Body of pancreas (tissue), 4 donors: ENCODE measurements at regions of chr4 and their contacts with region 1.

Region 1: DNA sequence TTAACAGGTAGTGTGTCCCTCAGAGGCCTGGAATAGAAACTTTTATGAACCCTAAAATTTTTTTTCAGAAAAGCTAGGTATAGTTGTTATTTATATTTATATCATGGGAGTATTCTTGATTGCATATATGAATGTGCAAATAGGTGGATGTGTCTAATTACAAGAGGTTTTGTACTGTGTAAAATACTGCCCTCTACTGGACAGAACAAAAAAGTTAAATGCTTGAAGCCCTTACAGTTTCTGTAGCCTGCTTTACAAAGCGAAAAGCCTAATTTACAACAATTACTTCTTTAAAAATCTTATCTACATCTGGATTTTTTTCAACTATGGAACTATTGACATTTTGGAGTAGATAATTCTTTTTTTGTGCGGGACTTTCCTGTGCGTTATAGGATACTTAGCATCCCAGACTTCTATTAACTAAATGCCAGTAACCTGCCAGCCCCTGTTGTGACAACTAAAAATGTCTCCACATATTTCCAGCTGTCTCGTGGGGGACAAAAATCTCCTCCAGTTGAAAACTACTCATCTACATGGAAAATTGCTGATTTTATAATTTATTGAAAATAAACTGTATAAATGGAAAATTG is 35.1 kb downstream of the ENPEP start:
- DNase-seq: no peak
- ATAC-seq: peak; percentile 55
- H3K4me3 ChIP-seq: no peak overlapping the region
- H3K27ac ChIP-seq: no peak overlapping the region
- H3K4me1 ChIP-seq: peaks cover 7% of the 10 kb centered on the region
- H3K27me3 ChIP-seq: no peaks in the 10 kb centered on the region
- CTCF ChIP-seq: peak; percentile 21 to 79 (median 63)
- POLR2A ChIP-seq: no peak

Region 2: DNA sequence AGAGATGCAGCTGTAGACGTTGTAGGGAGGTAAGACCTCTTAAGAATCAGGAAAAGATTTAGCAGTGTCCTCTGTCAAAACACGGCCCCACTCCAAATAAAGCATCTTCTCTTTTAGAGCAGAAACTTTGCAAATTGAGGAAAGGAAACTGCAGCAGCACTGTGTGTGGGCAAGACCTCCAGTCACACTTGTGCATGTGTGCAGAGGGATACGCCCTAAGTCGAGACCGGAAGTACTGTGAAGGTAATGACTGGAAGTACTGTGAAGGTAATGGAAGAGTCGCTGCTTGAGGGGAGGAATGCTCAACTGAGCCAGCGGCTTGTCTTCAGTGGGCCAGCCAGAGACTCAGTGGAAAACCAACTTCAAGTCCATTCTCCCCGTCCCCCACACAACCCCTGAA is 551.9 kb before region 1 on chr4:
- intact Hi-C with region 1: no loop called
- DNase-seq: no peak
- ATAC-seq: no peak
- H3K4me3 ChIP-seq: no peak overlapping the region
- H3K27ac ChIP-seq: no peak overlapping the region
- H3K4me1 ChIP-seq: peaks cover 2% of the 10 kb centered on the region
- H3K27me3 ChIP-seq: no peaks in the 10 kb centered on the region
- CTCF ChIP-seq: no peak
- POLR2A ChIP-seq: no peak

Region 3: GRCh38 chr4:109998867-109999584 is 512.0 kb before region 1 on chr4:
- intact Hi-C with region 1: loop called (anchors 5 kb)
- DNase-seq: peak in 1 of 4 donors; percentile 28
- ATAC-seq: peak; percentile 62
- H3K4me3 ChIP-seq: no peak overlapping the region
- H3K27ac ChIP-seq: no peak overlapping the region
- H3K4me1 ChIP-seq: no peaks in the 10 kb centered on the region
- H3K27me3 ChIP-seq: no peaks in the 10 kb centered on the region
- CTCF ChIP-seq: peak; percentile 22 to 70 (median 59)
- POLR2A ChIP-seq: no peak

Region 4: GRCh38 chr4:110310795-110311194 is 200.3 kb before region 1 on chr4:
- intact Hi-C with region 1: loop called (anchors 10 kb)
- DNase-seq: no peak
- ATAC-seq: no peak
- H3K4me3 ChIP-seq: no peak overlapping the region
- H3K27ac ChIP-seq: no peak overlapping the region
- H3K4me1 ChIP-seq: no peaks in the 10 kb centered on the region
- H3K27me3 ChIP-seq: no peaks in the 10 kb centered on the region
- CTCF ChIP-seq: no peak
- POLR2A ChIP-seq: no peak